Cardiac septum (tissue), 1 donor: ENCODE measurements at regions of chr18 and their contacts with region 1.

Region 1: GRCh38 chr18:31217038-31217849 is 54.6 kb upstream of the DSC1 start:
- DNase-seq: no peak

Region 2: DNA sequence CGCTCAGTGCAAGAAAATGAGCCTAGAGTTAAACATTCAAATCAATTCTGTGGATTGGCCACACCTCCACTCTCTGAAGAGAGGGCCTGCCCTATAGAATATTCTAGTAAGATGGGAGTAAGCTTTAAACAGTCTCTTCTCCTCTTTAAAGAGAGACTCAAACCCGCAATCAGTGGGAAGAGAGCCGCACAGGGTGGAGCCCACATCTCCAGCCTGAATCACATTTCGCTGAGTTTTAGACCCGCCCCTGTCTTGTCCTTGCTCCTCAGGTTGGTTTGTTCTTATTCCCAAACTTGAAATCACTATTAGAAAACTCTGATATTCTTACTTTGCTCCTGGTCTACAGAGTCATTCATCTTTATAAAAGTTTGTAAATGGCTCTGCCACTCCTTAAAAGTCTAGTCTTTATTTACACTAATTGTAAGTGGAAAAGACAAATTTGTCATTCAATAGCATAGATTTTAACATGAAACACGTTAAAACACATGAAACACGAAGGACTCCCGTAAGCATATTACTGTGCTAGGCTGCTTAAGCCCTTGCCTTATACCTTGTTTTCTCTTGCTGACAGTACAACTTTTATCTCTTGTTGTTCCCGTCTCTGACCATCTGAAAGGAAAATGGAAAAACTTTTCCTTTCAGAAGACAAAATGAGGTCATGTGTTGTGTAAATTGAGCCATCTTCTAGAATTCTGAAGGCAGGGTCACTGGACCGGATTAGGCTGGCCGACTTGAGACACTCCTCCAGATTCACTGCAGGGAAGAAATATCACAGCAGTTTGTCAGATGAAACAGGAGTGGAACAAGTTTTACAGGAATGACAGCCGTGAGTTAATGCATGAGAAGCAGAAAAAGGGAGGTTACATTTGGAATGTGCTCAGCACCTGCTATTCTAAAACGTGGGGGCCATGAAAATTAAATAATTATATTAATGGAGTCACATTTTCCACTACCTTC is 60.1 kb before region 1 on chr18:
- intact Hi-C with region 1: loop called (anchors 10 kb)
- DNase-seq: no peak